CD8-positive, alpha-beta T cell (primary cell): ENCODE measurements at regions of chr6 and their contacts with region 1.

Region 1: DNA sequence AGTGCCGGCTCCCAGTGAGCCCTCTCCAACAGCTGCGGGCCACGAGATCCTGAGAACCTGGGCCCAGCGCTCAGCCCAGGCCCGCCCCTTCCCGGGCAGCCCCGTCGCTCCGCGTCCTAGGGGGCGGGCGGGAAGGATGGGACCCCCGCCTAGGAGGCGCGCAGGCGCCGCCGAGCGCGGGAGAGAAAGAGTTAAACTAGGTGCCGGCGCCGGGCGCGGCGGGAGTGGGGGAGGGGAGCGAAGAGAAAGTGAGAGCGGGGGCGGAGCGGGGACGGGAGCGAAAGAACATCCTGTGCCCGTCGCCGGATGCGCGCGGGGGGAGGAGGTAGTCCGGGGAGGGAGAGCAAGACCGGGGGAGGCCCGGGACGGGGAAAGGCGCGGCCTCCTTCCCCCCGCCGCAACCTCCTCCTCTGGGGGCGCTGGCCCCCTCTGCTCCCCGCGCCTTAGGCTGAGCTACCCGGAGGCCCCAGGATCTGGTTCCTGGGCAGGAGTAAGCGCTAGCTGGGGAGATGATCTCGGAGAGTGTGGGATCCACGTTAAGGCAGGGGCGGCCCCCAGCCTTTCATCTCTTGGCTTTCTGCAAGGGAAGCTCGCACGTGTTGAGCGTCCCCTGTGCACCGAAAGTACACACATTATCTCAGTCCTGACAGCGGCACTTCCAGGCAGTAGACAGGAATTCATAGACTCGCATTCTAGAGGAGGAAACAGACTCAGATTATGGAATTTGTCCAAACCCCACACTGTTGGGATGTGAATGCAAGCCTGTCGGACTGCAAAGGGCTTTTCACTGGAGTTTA is 4.9 kb upstream of the ARMC12 start:
- DNase-seq: peak; percentile 86 to 98 (median 95)
- ATAC-seq: peak; percentile 55
- H3K4me3 ChIP-seq: peak overlapping the region; percentile 70 to 91
- H3K4me3 Mint-ChIP-seq: peak overlapping the region; percentile 91
- H3K27ac ChIP-seq: peak overlapping the region; percentile 91 to 95
- H3K27ac Mint-ChIP-seq: peak overlapping the region; percentile 89
- H3K4me1 ChIP-seq: peaks cover 87% of the 10 kb centered on the region
- H3K4me1 Mint-ChIP-seq: peaks cover 80% of the 10 kb centered on the region
- H3K27me3 ChIP-seq: no peaks in the 10 kb centered on the region
- H3K27me3 Mint-ChIP-seq: no peaks in the 10 kb centered on the region
- CTCF ChIP-seq: peak; percentile 17

Region 2: GRCh38 chr6:34696739-34697543 is 1035.0 kb before region 1 on chr6 and contains the start of gene ILRUN:
- CTCF ChIA-PET with region 1: no interaction called
- POLR2A ChIA-PET with region 1: no interaction called
- intact Hi-C with region 1: no loop called
- DNase-seq: peak; percentile 93 to 98 (median 97)
- ATAC-seq: peak; percentile 92
- H3K4me3 ChIP-seq: peak within 1 kb of the TSS; percentile 94 to 96
- H3K4me3 Mint-ChIP-seq: peak within 1 kb of the TSS; percentile 97
- H3K27ac ChIP-seq: peak within 1 kb of the TSS; percentile 93 to 98
- H3K27ac Mint-ChIP-seq: peak within 1 kb of the TSS; percentile 99
- H3K4me1 ChIP-seq: peaks cover 24% of the 10 kb centered on the region
- H3K4me1 Mint-ChIP-seq: peaks cover 43% of the 10 kb centered on the region
- H3K27me3 ChIP-seq: no peaks in the 10 kb centered on the region
- H3K27me3 Mint-ChIP-seq: no peaks in the 10 kb centered on the region
- CTCF ChIP-seq: no peak
- total RNA-seq, gene ILRUN: 54.8 to 58.8 TPM

Region 3: GRCh38 chr6:35297601-35298481 is 434.1 kb before region 1 on chr6 and contains the start of gene DEF6:
- CTCF ChIA-PET with region 1: interaction called, 10 read pairs
- POLR2A ChIA-PET with region 1: no interaction called
- intact Hi-C with region 1: loop called (anchors 1 kb)
- DNase-seq: peak; percentile 82 to 94 (median 88)
- ATAC-seq: peak; percentile 71
- H3K4me3 ChIP-seq: peak within 1 kb of the TSS; percentile 91 to 99
- H3K4me3 Mint-ChIP-seq: peak within 1 kb of the TSS; percentile 86
- H3K27ac ChIP-seq: peak within 1 kb of the TSS; percentile 81 to 89
- H3K27ac Mint-ChIP-seq: peak within 1 kb of the TSS; percentile 98
- H3K4me1 ChIP-seq: peaks cover 48% of the 10 kb centered on the region
- H3K4me1 Mint-ChIP-seq: peaks cover 51% of the 10 kb centered on the region
- H3K27me3 ChIP-seq: no peaks in the 10 kb centered on the region
- H3K27me3 Mint-ChIP-seq: no peaks in the 10 kb centered on the region
- CTCF ChIP-seq: peak; percentile 90
- total RNA-seq, gene DEF6: 172 to 182 TPM

Region 4: GRCh38 chr6:35522660-35523658 is 209.0 kb before region 1 on chr6:
- CTCF ChIA-PET with region 1: interaction called, 57 read pairs
- POLR2A ChIA-PET with region 1: interaction called, 5 read pairs
- intact Hi-C with region 1: loop called in 1 of 2 experiments (anchors 1 kb)
- DNase-seq: peak; percentile 46 to 87 (median 76)
- ATAC-seq: peak; percentile 86
- H3K4me3 ChIP-seq: peak overlapping the region in 1 of 2 experiments; percentile 9
- H3K4me3 Mint-ChIP-seq: peak overlapping the region; percentile 69
- H3K27ac ChIP-seq: no peak overlapping the region
- H3K27ac Mint-ChIP-seq: peak overlapping the region; percentile 64
- H3K4me1 ChIP-seq: peaks cover 19% of the 10 kb centered on the region
- H3K4me1 Mint-ChIP-seq: peaks cover 23% of the 10 kb centered on the region
- H3K27me3 ChIP-seq: no peaks in the 10 kb centered on the region
- H3K27me3 Mint-ChIP-seq: no peaks in the 10 kb centered on the region
- CTCF ChIP-seq: peak; percentile 96

Region 5: DNA sequence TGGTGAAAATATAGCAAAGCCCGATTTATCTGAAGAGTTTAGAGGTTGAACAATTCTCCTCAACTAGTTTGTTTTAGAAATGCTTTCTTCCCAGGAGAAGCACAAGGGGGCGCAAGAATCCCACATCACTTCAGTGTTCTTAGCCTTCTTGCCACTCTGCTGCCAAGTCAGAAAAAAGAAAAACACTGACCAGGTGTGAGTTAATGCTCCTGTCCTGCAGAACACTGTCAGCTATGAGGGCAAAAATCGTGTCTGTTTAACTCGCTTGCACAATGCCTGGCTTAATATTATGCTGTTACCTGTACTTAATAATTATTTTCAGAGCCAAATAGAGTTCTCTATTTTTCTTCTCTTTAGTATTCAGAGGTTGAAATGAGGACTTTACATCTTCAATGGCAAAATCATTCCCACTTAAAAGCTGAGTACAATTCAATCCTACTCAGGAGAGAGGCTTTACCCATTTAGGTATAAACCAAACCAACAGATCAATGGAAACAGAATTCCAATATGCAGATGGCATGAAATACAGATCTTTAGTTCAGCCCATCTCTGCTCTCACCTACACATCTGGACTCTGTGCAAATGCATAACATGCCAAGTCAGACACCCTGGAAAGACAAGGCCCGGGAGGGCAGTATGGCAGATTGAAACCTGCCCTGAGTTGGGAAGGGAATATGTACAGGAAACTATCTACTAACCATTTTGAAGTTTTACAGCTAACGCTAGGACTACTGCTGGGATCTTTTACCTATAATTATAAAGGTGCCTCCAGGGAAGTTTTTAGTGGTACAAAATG is 147.8 kb before region 1 on chr6:
- CTCF ChIA-PET with region 1: interaction called, 152 read pairs
- POLR2A ChIA-PET with region 1: interaction called, 6 read pairs
- intact Hi-C with region 1: loop called (anchors 1 kb)
- DNase-seq: peak; percentile 49 to 86 (median 78)
- ATAC-seq: peak; percentile 76
- H3K4me3 ChIP-seq: no peak overlapping the region
- H3K4me3 Mint-ChIP-seq: no peak overlapping the region
- H3K27ac ChIP-seq: no peak overlapping the region
- H3K27ac Mint-ChIP-seq: peak overlapping the region; percentile 86
- H3K4me1 ChIP-seq: peaks cover 47% of the 10 kb centered on the region
- H3K4me1 Mint-ChIP-seq: peaks cover 63% of the 10 kb centered on the region
- H3K27me3 ChIP-seq: no peaks in the 10 kb centered on the region
- H3K27me3 Mint-ChIP-seq: no peaks in the 10 kb centered on the region
- CTCF ChIP-seq: peak; percentile 88

Region 6: GRCh38 chr6:35624341-35625070 is 107.4 kb before region 1 on chr6:
- CTCF ChIA-PET with region 1: interaction called, 341 read pairs
- POLR2A ChIA-PET with region 1: interaction called, 9 read pairs
- intact Hi-C with region 1: loop called (anchors 1 kb)
- DNase-seq: peak in 3 of 9 experiments; percentile 58 to 79 (median 64)
- ATAC-seq: peak; percentile 86
- H3K4me3 ChIP-seq: no peak overlapping the region
- H3K4me3 Mint-ChIP-seq: peak overlapping the region; percentile 30
- H3K27ac ChIP-seq: peak overlapping the region; percentile 14 to 23
- H3K27ac Mint-ChIP-seq: peak overlapping the region; percentile 91
- H3K4me1 ChIP-seq: peaks cover 47% of the 10 kb centered on the region
- H3K4me1 Mint-ChIP-seq: peaks cover 48% of the 10 kb centered on the region
- H3K27me3 ChIP-seq: no peaks in the 10 kb centered on the region
- H3K27me3 Mint-ChIP-seq: no peaks in the 10 kb centered on the region
- CTCF ChIP-seq: peak; percentile 70

Region 7: GRCh38 chr6:35663447-35664235 is 68.3 kb before region 1 on chr6:
- CTCF ChIA-PET with region 1: interaction called, 21 read pairs
- POLR2A ChIA-PET with region 1: interaction called, 9 read pairs
- intact Hi-C with region 1: loop called in 1 of 2 experiments (anchors 5 kb)
- DNase-seq: peak in 1 of 9 experiments; percentile 46
- ATAC-seq: peak; percentile 77
- H3K4me3 ChIP-seq: no peak overlapping the region
- H3K4me3 Mint-ChIP-seq: no peak overlapping the region
- H3K27ac ChIP-seq: no peak overlapping the region
- H3K27ac Mint-ChIP-seq: no peak overlapping the region
- H3K4me1 ChIP-seq: peaks cover 57% of the 10 kb centered on the region
- H3K4me1 Mint-ChIP-seq: peaks cover 17% of the 10 kb centered on the region
- H3K27me3 ChIP-seq: no peaks in the 10 kb centered on the region
- H3K27me3 Mint-ChIP-seq: no peaks in the 10 kb centered on the region
- CTCF ChIP-seq: no peak

Region 8: GRCh38 chr6:35688581-35689322 is 43.2 kb before region 1 on chr6 and contains the start of gene FKBP5:
- CTCF ChIA-PET with region 1: interaction called, 20 read pairs
- POLR2A ChIA-PET with region 1: interaction called, 19 read pairs
- intact Hi-C with region 1: loop called (anchors 1 kb)
- DNase-seq: peak; percentile 65 to 93 (median 87)
- ATAC-seq: peak; percentile 87
- H3K4me3 ChIP-seq: peak within 1 kb of the TSS; percentile 63 to 85
- H3K4me3 Mint-ChIP-seq: peak within 1 kb of the TSS; percentile 98
- H3K27ac ChIP-seq: peak within 1 kb of the TSS; percentile 48 to 64
- H3K27ac Mint-ChIP-seq: peak within 1 kb of the TSS; percentile 96
- H3K4me1 ChIP-seq: peaks cover 14% of the 10 kb centered on the region
- H3K4me1 Mint-ChIP-seq: peaks cover 17% of the 10 kb centered on the region
- H3K27me3 ChIP-seq: no peaks in the 10 kb centered on the region
- H3K27me3 Mint-ChIP-seq: no peaks in the 10 kb centered on the region
- CTCF ChIP-seq: no peak
- total RNA-seq, gene FKBP5: 25.7 to 27.1 TPM

Region 9: DNA sequence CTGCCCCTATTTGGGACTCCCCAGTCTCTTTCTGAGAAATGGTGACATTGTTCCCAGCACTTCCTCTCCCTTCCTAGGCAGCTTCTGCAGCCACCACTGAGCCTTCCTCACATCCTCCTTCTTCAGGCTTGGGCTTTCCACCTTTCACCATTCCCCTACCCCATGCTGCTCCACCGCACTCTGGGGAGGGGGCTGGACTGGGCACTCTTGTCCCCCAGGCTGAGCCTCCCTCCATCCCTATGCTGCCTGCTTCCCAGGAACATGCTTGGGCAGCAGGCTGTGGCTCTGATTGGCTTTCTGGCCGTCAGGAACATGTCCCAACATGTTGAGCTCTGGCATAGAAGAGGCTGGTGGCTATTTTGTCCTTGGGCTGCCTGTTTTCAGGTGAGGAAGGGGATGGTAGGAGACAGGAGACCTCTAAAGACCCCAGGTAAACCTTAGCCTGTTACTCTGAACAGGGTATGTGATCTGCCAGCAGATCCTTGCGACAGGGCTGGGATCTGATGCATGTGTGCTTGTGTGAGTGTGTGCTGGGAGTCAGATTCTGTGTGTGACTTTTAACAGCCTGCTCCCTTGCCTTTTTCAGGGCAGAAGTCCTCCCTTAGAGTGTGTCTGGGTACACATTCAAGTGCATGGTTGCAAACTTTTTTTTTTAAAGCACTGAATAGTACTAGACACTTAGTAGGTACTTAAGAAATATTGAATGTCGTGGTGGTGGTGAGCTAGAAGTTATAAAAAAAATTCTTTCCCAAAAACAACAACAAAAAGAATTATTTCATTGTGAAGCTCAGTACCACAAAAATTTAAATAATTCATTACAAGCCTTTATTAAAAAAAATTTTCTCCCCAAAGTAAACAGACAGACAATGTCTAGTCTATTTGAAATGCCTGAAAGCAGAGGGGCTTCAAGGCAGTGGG is 944.5 kb after region 1 on chr6:
- CTCF ChIA-PET with region 1: no interaction called
- POLR2A ChIA-PET with region 1: no interaction called
- intact Hi-C with region 1: no loop called
- DNase-seq: no peak
- ATAC-seq: no peak
- H3K4me3 ChIP-seq: no peak overlapping the region
- H3K4me3 Mint-ChIP-seq: no peak overlapping the region
- H3K27ac ChIP-seq: no peak overlapping the region
- H3K27ac Mint-ChIP-seq: no peak overlapping the region
- H3K4me1 ChIP-seq: peaks cover 25% of the 10 kb centered on the region
- H3K4me1 Mint-ChIP-seq: peaks cover 21% of the 10 kb centered on the region
- H3K27me3 ChIP-seq: peaks cover 0 to 10% of the 10 kb centered on the region in 2 experiments
- H3K27me3 Mint-ChIP-seq: peaks cover 3% of the 10 kb centered on the region
- CTCF ChIP-seq: no peak